ENCODE measurements at regions of chr1 and their contacts with region 1.

Region 1: DNA sequence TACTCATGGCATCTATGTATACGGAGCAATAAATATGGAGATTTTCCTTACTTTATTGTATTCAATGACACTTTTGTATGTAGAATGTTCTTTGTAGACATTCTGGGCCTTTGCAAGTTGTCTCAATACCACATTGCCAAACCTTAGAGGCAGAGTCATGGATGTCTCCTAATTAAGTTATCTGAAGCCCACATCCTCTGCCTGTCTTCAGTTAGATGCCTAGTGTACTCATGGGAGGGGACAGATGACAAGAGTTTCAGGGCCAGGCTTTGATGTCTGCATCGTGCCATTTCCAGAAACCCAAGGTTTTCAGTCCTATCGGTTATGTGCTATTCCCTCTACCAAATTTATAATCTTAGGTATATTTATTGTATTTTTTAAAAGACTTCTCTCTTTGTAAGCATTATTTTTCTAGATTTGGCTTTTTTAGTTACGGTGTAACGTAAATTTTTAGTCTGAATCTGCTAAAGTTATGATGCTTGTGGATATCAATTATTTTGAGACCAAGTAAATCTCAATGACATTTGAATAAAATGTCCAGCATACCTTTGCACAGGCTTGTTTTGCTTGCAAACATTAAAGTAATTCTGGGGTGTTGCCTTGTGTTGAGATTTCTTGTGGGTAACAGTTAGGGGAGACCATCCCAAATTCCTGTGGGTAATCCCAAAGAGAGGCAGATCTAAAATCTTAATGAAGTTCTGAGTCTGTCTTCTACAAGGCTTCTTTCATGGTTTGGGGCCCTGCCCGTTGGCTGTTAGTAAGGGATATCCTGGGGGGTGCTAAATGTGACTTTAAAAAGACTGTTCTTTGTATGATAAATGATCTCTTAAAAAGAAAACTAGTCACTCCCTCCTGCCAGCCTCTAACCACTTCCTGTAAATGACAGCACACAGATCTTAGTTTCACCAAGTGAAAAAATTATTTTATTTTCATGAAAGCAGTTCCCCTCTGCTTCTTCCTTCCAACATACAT is 8.0 kb upstream of the MACF1 start:
- DNase-seq: peak; percentile 33
- H3K4me3 ChIP-seq: peak overlapping the region in 1 of 2 experiments; percentile 14; a peak in 1 of 4 replicates
- H3K27ac ChIP-seq: peak overlapping the region; percentile 75 to 99
- H3K4me1 ChIP-seq: peaks cover 8 to 54% of the 10 kb centered on the region in 2 experiments; a peak in 3 of 4 replicates
- H3K27me3 ChIP-seq: no peaks in the 10 kb centered on the region
- CTCF ChIP-seq: no peak
- EP300 ChIP-seq: peak in 1 of 2 experiments; percentile 80; a peak in 1 of 4 replicates
- RAD21 ChIP-seq: no peak

Region 2: DNA sequence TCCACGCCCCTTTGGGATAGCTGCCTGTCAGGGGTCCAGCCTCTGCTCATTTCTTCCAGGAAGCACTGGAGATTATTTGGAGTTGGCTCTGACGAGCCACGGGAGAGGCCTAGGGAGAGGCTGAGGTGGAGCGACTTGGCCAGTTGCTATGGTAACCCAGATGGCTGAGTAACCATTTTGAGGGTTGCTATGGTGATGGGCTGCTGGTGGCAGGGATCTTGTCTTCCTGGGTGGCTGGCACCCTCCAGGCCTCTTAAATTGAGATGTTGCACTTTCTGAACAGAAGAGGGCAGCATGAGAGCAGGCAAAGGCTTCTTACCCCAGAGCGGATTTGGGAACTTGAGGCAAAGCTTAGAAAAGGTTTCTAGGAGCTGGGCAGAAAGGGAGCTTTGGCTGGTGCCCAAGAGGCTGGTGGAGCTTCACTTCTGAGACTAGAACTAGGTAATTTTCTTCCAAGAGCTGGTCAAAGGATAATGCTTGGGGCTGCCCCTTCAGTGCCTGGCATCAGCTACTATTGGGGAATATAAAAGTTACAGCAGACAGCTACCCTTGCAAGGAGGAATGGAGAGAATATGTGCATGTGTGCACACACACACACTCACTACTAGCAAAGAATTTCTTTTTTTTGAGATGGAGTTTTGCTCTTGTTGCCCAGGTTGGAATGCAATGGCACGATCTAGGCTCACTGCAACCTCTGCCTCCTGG is 97.8 kb before region 1 on chr1:
- CTCF ChIA-PET with region 1: interaction called, 188 read pairs
- POLR2A ChIA-PET with region 1: no interaction called
- DNase-seq: peak; percentile 89
- H3K4me3 ChIP-seq: peak overlapping the region in 1 of 2 experiments; percentile 30; a peak in 1 of 4 replicates
- H3K27ac ChIP-seq: peak overlapping the region in 1 of 2 experiments; percentile 60; a peak in 2 of 4 replicates
- H3K4me1 ChIP-seq: peaks cover 9 to 17% of the 10 kb centered on the region in 2 experiments
- H3K27me3 ChIP-seq: no peaks in the 10 kb centered on the region
- CTCF ChIP-seq: peak; percentile 79
- EP300 ChIP-seq: 0 out of 4 replicates have a peak, but pooled peaks of 1 of the 2 experiments have one; percentile 8
- RAD21 ChIP-seq: peak; percentile 93

Region 3: DNA sequence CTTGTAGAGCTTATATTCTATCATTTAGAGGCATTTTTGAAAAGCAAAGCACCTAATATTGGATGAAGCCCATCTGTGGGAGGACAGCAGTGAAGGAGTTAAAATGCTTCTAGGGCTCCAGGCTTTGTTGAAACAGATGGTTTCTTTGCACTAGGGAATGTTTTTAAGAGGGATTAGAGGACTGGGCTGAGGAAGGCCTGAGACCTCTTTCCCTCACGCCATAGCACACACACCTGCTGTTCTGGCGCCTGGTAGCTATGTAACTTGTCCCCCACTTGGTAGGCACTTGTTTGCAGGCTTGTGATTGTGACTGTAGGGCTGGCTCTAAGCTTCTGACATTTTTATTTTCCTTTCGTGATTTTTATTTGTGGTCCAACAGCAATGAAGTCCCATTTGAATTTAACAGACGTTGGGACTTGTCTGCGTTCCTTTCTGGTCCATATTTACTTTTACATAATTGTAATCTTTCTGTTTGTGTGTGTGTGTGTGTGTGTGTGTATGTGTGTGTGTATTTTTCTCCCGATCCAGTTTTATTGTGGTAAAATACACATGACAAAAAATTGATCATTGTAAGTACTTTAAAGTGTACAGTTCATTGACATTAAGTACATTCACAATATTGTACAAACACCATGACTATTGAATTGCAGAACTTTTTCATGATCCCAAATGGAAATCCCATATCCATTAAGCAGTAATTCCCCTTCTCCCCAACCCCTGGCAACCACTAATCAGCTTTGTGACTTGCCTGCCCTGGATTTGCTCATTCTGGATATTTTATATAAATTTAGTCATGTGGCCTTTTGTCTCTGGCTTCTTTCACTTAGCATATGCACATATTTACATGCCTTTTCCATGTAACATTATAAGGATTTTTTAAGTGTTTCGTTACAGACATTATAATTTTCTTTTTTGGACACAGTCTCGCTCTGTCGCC is 25.5 kb before region 1 on chr1:
- CTCF ChIA-PET with region 1: interaction called, 53 read pairs
- POLR2A ChIA-PET with region 1: interaction called, 4 read pairs
- DNase-seq: peak; percentile 29
- H3K4me3 ChIP-seq: no peak overlapping the region
- H3K27ac ChIP-seq: no peak overlapping the region
- H3K4me1 ChIP-seq: peaks cover 13 to 36% of the 10 kb centered on the region in 2 experiments; a peak in 3 of 4 replicates
- H3K27me3 ChIP-seq: no peaks in the 10 kb centered on the region
- CTCF ChIP-seq: no peak
- EP300 ChIP-seq: no peak
- RAD21 ChIP-seq: no peak

Region 4: DNA sequence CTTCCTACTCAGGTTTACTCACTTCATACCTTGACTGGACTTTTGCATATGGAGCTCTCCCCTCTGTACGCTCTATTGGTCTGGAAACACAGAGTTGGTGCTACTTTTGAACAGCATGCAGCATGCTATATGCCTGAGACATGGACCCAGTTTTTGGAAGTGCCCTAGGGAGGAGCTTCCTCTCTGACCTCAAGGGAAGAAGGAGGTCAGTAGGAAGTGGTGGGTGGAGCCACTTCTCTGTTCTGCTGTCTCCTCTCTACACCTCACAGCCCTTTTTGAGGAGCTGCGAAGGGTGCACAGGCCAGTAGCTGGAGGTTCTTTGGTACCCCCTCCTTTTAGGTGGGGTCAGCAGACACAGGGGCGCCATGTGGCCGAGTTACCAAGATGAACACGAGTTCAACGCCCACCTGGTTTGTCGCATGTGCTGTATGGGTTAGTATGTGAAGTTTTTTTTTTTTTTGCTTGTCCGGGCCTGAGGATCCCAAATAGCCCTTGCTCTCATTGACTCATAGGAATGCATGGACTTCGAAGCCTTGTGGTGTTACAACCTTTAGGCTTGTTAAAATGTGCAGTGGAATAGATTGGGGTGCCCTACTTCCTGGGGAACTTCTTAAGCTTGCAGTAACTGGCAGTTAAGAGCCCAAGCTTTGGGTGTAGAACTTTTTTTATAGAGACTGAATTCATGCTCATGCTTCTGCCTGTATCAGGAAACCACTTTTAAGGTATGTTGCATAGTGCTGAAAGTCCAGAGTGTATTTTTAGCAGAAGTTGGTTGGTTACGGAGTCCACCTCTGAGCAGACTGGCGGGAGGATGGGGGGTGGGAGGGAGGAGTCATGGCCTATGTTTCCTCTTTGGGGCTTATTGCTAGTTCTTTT is 18.7 kb after region 1 on chr1:
- CTCF ChIA-PET with region 1: interaction called, 29 read pairs
- POLR2A ChIA-PET with region 1: no interaction called
- DNase-seq: no peak
- H3K4me3 ChIP-seq: no peak overlapping the region
- H3K27ac ChIP-seq: peak overlapping the region; percentile 73 to 96; a peak in 3 of 4 replicates
- H3K4me1 ChIP-seq: peaks cover 8 to 43% of the 10 kb centered on the region in 2 experiments
- H3K27me3 ChIP-seq: no peaks in the 10 kb centered on the region
- CTCF ChIP-seq: no peak
- EP300 ChIP-seq: no peak
- RAD21 ChIP-seq: no peak

Region 5: GRCh38 chr1:39250460-39251240 is 54.1 kb after region 1 on chr1:
- CTCF ChIA-PET with region 1: interaction called, 39 read pairs
- POLR2A ChIA-PET with region 1: no interaction called
- DNase-seq: no peak
- H3K4me3 ChIP-seq: no peak overlapping the region
- H3K27ac ChIP-seq: no peak overlapping the region
- H3K4me1 ChIP-seq: peaks cover 0 to 5% of the 10 kb centered on the region in 2 experiments; a peak in 3 of 4 replicates
- H3K27me3 ChIP-seq: no peaks in the 10 kb centered on the region
- CTCF ChIP-seq: no peak
- EP300 ChIP-seq: no peak
- RAD21 ChIP-seq: no peak

Region 6: GRCh38 chr1:39268112-39268581 is 71.6 kb after region 1 on chr1:
- CTCF ChIA-PET with region 1: interaction called, 100 read pairs
- POLR2A ChIA-PET with region 1: no interaction called
- DNase-seq: no peak
- H3K4me3 ChIP-seq: no peak overlapping the region
- H3K27ac ChIP-seq: peak overlapping the region in 1 of 2 experiments; percentile 36; a peak in 1 of 4 replicates
- H3K4me1 ChIP-seq: peaks cover 10 to 12% of the 10 kb centered on the region in 2 experiments; a peak in 3 of 4 replicates
- H3K27me3 ChIP-seq: no peaks in the 10 kb centered on the region
- CTCF ChIP-seq: no peak
- EP300 ChIP-seq: no peak
- RAD21 ChIP-seq: no peak

Region 7: DNA sequence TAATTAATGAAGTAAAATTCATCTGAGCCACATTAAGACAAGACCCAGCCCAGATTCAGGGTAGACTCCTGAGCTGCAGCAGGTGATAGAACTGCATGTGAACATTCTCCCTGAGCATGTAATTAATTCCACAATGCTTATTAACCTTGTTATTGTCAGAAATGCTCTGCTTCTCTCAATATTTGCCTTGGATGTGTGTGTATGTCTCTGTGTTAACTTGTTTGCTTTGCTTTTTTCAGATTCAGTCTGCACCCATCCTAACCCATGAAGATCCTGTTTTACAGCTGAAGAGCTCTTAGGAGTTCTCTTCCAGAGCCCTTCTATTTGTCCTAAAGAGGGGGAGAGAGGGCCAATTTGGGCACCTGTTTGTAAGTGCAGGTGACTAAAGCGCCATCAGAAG is 151.7 kb after region 1 on chr1:
- CTCF ChIA-PET with region 1: no interaction called
- POLR2A ChIA-PET with region 1: no interaction called
- DNase-seq: no peak
- H3K4me3 ChIP-seq: no peak overlapping the region
- H3K27ac ChIP-seq: no peak overlapping the region
- H3K4me1 ChIP-seq: no peaks in the 10 kb centered on the region
- H3K27me3 ChIP-seq: no peaks in the 10 kb centered on the region
- CTCF ChIP-seq: no peak
- EP300 ChIP-seq: no peak
- RAD21 ChIP-seq: no peak